Ovary (tissue), 10 donors: ENCODE measurements at regions of chr12 and their contacts with region 1.

Region 1: GRCh38 chr12:94020335-94020734 is 128.0 kb upstream of the PLXNC1 start:
- DNase-seq: no peak
- H3K4me3 ChIP-seq: no peak overlapping the region
- H3K27ac ChIP-seq: no peak overlapping the region
- H3K4me1 ChIP-seq: no peaks in the 10 kb centered on the region
- H3K27me3 ChIP-seq: no peaks in the 10 kb centered on the region
- CTCF ChIP-seq: no peak
- EP300 ChIP-seq: no peak
- POLR2A ChIP-seq: no peak

Region 2: GRCh38 chr12:93943766-93944165 is 76.6 kb before region 1 on chr12:
- intact Hi-C with region 1: no loop called
- DNase-seq: no peak
- H3K4me3 ChIP-seq: no peak overlapping the region
- H3K27ac ChIP-seq: no peak overlapping the region
- H3K4me1 ChIP-seq: no peaks in the 10 kb centered on the region
- H3K27me3 ChIP-seq: no peaks in the 10 kb centered on the region
- CTCF ChIP-seq: no peak
- EP300 ChIP-seq: no peak
- POLR2A ChIP-seq: no peak

Region 3: DNA sequence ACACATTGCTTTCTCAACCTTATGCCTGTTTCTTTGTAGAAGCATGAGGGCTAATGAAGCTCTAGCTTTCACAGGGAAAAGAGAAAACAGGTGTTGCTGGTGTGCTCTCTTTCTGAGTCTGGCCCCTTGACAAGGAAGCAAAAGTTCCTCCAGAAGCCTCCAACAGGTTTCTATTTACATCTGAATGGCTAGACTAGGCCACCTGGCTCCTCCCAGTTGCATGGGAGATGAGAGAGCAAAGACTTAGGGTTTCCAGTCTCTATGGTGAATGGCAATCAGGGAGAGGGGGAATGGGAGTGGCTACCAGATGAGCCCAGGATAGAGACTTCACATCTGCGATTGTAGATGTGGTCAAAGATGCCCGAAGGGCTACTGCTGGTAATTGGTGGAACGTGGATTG is 10.0 kb before region 1 on chr12:
- intact Hi-C with region 1: no loop called
- DNase-seq: no peak
- H3K4me3 ChIP-seq: no peak overlapping the region
- H3K27ac ChIP-seq: no peak overlapping the region
- H3K4me1 ChIP-seq: no peaks in the 10 kb centered on the region
- H3K27me3 ChIP-seq: no peaks in the 10 kb centered on the region
- CTCF ChIP-seq: no peak
- EP300 ChIP-seq: no peak
- POLR2A ChIP-seq: no peak

Region 4: DNA sequence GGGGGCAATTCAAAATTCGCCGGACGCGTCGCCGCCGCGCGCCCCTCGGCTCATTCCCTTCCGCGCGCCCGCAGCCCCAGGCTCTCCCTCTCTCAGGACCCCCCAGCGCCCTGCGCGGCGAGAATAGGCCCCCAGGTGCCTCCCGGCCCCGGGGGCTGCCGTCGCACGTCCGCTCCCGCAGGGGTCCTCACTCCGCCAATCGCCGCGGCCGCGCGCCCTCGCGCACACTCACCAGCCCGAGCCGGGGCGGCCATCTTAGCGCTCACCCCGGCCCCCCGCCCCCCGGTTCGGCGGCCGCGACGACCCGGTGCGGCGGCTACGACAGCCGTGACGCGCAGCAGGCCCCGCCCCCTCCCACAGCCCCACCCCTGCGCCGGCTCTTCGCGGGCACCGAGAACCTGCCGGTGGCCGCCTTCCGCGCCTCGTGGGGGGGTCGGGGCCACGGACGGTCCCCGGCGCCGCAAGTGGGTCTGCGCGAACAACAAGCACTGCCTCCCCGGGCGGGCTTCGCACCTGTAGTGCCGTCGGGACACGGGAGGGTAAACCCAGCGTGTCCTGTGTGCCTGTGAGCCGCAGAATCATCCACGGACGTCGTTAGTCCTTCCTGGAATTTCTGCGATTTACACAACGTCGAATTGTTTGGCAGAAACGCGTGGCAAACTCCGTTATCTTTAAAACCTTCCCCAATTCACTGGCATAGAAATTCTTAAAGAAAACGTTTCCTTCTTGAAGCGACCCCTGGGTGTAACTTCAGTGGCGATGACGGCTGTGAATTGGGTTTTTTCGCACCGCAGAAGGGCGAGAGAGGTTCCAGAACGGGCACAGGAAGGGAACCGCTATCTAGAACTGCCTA is 1528.4 kb after region 1 on chr12:
- intact Hi-C with region 1: loop called in 1 of 4 experiments (anchors 5 kb)
- DNase-seq: peak; percentile 63 to 77 (median 74)
- H3K4me3 ChIP-seq: peak overlapping the region; percentile 85
- H3K27ac ChIP-seq: peak overlapping the region; percentile 56 to 73
- H3K4me1 ChIP-seq: no peaks in the 10 kb centered on the region
- H3K27me3 ChIP-seq: no peaks in the 10 kb centered on the region
- CTCF ChIP-seq: no peak
- EP300 ChIP-seq: no peak
- POLR2A ChIP-seq: peak; percentile 70